ENCODE measurements at regions of chr9 and their contacts with region 1.

Region 1: DNA sequence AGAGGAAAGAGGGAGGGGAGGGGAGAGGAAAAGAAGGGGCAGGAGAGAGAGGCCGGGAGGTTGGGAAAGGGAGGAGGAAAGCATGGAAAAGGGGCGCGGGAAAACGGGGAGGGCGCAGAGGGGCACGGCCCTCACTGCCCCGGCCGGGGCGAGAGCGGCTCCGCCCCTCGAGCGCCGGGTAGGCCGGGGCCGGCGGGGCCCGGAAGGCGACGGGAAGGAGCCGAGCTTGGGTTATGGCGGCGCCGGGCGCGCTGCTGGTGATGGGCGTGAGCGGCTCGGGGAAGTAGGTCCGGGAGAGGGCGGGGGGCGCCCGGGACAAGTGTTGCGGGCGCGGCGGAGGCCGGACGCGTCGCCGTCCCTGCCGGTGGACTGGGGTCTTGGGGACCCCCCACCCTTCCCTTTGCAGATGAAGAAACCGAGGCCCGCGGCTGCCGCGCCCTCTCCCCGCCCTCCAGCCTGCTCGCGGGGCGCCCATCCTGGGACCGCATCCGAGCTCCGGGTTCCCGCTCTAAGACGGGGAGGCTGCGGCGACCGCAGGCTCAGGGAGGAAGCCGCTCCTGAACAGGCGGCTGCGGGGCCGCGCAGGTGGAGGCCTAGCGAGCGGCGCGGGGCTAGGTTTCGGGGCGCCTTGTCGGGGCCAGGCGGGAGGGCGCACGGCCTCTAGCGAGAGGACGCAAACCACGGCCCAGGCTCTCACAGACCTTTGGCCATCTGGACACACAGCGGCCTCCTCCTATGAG is at the start of gene IDNK:
- DNase-seq: peak; percentile 76
- H3K4me3 Mint-ChIP-seq: peak within 1 kb of the TSS; percentile 77
- H3K27ac Mint-ChIP-seq: peak within 1 kb of the TSS; percentile 93
- H3K4me1 Mint-ChIP-seq: peaks cover 26% of the 10 kb centered on the region
- H3K27me3 Mint-ChIP-seq: no peaks in the 10 kb centered on the region
- total RNA-seq, gene IDNK: 4.4 to 5.0 TPM

Region 2: GRCh38 chr9:83334320-83334719 is 288.8 kb before region 1 on chr9:
- CTCF ChIA-PET with region 1: interaction called, 21 read pairs
- POLR2A ChIA-PET with region 1: no interaction called
- intact Hi-C with region 1: no loop called
- DNase-seq: peak; percentile 85
- H3K4me3 Mint-ChIP-seq: no peak overlapping the region
- H3K27ac Mint-ChIP-seq: no peak overlapping the region
- H3K4me1 Mint-ChIP-seq: no peaks in the 10 kb centered on the region
- H3K27me3 Mint-ChIP-seq: no peaks in the 10 kb centered on the region

Region 3: DNA sequence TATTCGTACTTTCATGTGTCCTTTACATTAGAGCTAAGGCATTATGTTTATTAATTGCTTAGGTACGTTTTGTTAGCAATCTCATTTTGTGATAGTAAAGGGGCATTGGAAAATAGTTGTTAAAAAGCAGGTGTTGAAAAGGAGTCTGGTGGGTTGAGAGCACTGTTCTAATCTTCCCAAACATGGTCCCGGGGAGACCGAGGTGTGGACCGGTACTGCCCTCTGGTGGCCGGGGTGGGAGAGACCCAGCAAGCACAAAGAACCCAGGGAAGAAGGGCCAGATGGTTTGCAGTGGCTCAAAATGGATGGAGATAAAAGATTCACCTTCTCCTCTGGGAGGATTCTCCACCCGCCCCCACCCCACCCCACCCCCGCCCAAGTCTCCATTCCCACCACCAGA is 26.0 kb after region 1 on chr9:
- CTCF ChIA-PET with region 1: interaction called, 41 read pairs
- POLR2A ChIA-PET with region 1: interaction called, 4 read pairs
- intact Hi-C with region 1: loop called (anchors 1 kb)
- DNase-seq: peak; percentile 81
- H3K4me3 Mint-ChIP-seq: no peak overlapping the region
- H3K27ac Mint-ChIP-seq: no peak overlapping the region
- H3K4me1 Mint-ChIP-seq: peaks cover 1% of the 10 kb centered on the region
- H3K27me3 Mint-ChIP-seq: no peaks in the 10 kb centered on the region

Region 4: GRCh38 chr9:83920927-83921707 is 298.0 kb after region 1 on chr9 and contains the start of gene KIF27:
- CTCF ChIA-PET with region 1: interaction called, 11 read pairs
- POLR2A ChIA-PET with region 1: interaction called, 7 read pairs
- intact Hi-C with region 1: loop called (anchors 1 kb)
- DNase-seq: peak; percentile 99
- H3K4me3 Mint-ChIP-seq: peak within 1 kb of the TSS; percentile 80
- H3K27ac Mint-ChIP-seq: peak within 1 kb of the TSS; percentile 91
- H3K4me1 Mint-ChIP-seq: peaks cover 10% of the 10 kb centered on the region
- H3K27me3 Mint-ChIP-seq: no peaks in the 10 kb centered on the region
- total RNA-seq, gene KIF27: 2.6 to 3.0 TPM

Region 5: DNA sequence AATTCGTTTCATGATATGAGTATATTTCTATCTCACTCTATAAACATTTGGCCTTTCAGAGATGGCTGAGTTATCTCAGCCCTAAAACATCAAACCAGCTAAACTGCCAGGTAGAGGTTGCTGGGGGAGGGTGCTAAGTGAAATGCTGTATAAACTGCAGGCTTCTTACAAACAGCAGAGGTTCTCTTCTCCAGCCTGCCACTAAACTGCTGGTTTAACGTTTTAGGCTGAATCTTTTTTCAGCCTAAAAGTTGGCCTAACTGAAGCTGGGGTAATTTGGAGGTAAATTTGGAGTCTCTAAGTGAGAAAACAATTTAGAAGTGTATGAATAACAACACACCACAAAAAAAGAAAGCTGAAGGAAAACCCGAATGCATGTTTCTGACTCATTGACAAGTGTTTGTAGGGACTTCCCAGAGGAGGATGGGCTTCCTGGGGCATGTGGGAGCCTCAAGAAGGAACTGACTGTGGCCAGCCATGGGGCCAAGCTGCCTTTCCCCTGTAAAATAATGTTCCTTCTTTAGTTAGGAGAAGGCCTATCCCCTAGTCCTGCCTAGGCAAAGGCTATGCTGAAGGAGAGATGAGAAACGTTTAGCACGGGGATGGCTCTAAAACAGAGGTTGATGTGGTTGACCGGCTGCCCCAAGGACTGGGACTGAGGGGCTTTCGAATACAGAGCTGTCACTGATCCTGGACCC is 673.2 kb after region 1 on chr9:
- CTCF ChIA-PET with region 1: interaction called, 4 read pairs
- POLR2A ChIA-PET with region 1: no interaction called
- intact Hi-C with region 1: loop called (anchors 10 kb)
- DNase-seq: peak; percentile 78
- H3K4me3 Mint-ChIP-seq: peak overlapping the region; percentile 49
- H3K27ac Mint-ChIP-seq: peak overlapping the region; percentile 98
- H3K4me1 Mint-ChIP-seq: peaks cover 58% of the 10 kb centered on the region
- H3K27me3 Mint-ChIP-seq: no peaks in the 10 kb centered on the region